ENCODE measurements at regions of chr2 and their contacts with region 1.

Region 1: GRCh38 chr2:207149249-207150213 is 16.2 kb downstream of the KLF7 start:
- DNase-seq: no peak
- H3K4me3 ChIP-seq: no peak overlapping the region
- H3K27ac ChIP-seq: peak overlapping the region; percentile 5 to 62
- H3K4me1 ChIP-seq: peaks cover 0 to 30% of the 10 kb centered on the region in 2 donors
- H3K27me3 ChIP-seq: no peaks in the 10 kb centered on the region
- CTCF ChIP-seq: no peak
- POLR2A ChIP-seq: no peak

Region 2: GRCh38 chr2:205989271-205990071 is 1160.1 kb before region 1 on chr2:
- intact Hi-C with region 1: no loop called
- DNase-seq: no peak
- H3K4me3 ChIP-seq: no peak overlapping the region
- H3K27ac ChIP-seq: no peak overlapping the region
- H3K4me1 ChIP-seq: no peaks in the 10 kb centered on the region
- H3K27me3 ChIP-seq: no peaks in the 10 kb centered on the region
- CTCF ChIP-seq: no peak
- POLR2A ChIP-seq: no peak

Region 3: GRCh38 chr2:207121784-207122183 is 27.7 kb before region 1 on chr2:
- intact Hi-C with region 1: no loop called
- DNase-seq: no peak
- H3K4me3 ChIP-seq: no peak overlapping the region
- H3K27ac ChIP-seq: no peak overlapping the region
- H3K4me1 ChIP-seq: peaks cover 0 to 7% of the 10 kb centered on the region in 2 donors
- H3K27me3 ChIP-seq: no peaks in the 10 kb centered on the region
- CTCF ChIP-seq: no peak
- POLR2A ChIP-seq: no peak

Region 4: GRCh38 chr2:207202645-207203044 is 53.1 kb after region 1 on chr2:
- intact Hi-C with region 1: loop called (anchors 2 kb)
- DNase-seq: no peak
- H3K4me3 ChIP-seq: no peak overlapping the region
- H3K27ac ChIP-seq: no peak overlapping the region
- H3K4me1 ChIP-seq: no peaks in the 10 kb centered on the region
- H3K27me3 ChIP-seq: no peaks in the 10 kb centered on the region
- CTCF ChIP-seq: no peak
- POLR2A ChIP-seq: no peak

Measured in breast epithelium (tissue), 4 donors.